CD4-positive, alpha-beta memory T cell (primary cell): ENCODE measurements at regions of chr6 and their contacts with region 1.

Region 1: DNA sequence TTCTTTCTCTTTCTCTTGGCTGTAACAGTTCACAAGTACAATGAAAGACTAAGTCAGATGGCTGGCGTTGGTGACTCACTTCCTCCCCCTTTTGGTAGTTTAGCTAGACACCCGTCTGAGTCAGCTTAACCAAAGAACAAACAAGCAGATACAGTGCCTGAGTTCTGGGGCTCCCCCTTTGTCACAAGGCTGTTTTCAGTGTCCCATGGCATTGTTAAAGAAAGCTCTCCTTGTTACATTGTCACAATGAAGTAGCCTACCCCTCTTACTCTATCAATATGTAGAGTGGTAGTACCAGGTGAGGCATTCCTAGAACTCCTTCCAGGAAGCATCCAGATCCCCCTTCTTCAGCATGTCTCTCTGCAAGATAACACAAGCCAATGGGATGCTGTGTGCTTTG is 38.6 kb downstream of the KIAA0408 start:
- DNase-seq: peak; percentile 45 to 85 (median 58)
- H3K4me3 ChIP-seq: no peak overlapping the region
- H3K4me3 Mint-ChIP-seq: no peak overlapping the region
- H3K27ac ChIP-seq: no peak overlapping the region
- H3K27ac Mint-ChIP-seq: peak overlapping the region in 4 of 7 donors; percentile 1 to 49 (median 38)
- H3K4me1 ChIP-seq: no peaks in the 10 kb centered on the region
- H3K4me1 Mint-ChIP-seq: peaks cover 5 to 7% (median 6%) of the 10 kb centered on the region in 4 donors
- H3K27me3 ChIP-seq: no peaks in the 10 kb centered on the region
- H3K27me3 Mint-ChIP-seq: no peaks in the 10 kb centered on the region

Region 2: GRCh38 chr6:125764121-125764671 is 1656.4 kb before region 1 on chr6:
- CTCF ChIA-PET with region 1: no interaction called
- POLR2A ChIA-PET with region 1: no interaction called
- intact Hi-C with region 1: no loop called
- DNase-seq: no peak
- H3K4me3 ChIP-seq: no peak overlapping the region
- H3K4me3 Mint-ChIP-seq: no peak overlapping the region
- H3K27ac ChIP-seq: no peak overlapping the region
- H3K27ac Mint-ChIP-seq: no peak overlapping the region
- H3K4me1 ChIP-seq: no peaks in the 10 kb centered on the region
- H3K4me1 Mint-ChIP-seq: peaks cover 0 to 5% (median 0%) of the 10 kb centered on the region in 4 donors
- H3K27me3 ChIP-seq: peaks cover 4% of the 10 kb centered on the region
- H3K27me3 Mint-ChIP-seq: peaks cover 36 to 45% of the 10 kb centered on the region in 2 donors

Region 3: DNA sequence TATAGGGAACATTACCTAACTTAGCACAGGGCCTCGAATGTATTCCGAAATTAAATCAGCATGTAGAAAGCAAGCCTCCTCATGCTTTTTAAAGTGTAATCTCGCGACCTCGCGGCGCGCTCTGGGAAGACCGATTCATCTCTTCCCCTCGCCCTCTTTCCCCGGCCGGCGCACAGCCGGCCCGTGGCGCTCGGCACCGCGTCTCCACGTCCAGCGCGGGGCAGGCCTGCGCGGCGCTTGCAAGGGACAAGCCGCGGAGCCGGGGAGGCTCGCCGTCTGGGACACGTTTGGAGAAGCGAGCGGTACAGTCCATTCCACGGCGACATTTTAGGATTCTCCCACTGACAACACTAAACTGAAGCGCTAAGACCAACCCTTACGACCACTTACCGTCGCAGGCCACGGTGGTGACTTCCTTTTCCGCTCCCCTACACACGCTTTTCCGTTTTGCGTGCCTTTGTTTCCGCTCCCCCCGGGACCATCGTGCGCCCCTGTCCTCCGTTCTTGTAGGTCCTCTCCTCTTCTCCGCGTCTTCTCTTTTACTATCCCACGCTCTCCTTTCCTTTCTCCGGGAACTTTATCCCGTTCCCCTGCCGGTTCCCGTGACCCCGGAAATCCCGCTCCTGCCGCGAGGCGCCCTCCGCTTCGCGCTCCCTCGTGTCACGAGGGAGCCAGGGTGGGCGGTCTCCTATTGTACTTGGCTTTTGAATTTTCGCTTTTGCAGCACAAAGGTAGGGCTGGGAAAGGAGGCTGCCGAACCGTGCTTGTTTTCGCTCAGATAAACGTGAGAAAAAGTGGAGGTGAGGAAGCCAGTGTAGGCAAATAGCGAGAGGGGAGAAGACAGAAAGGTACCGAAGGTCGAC is 77.4 kb before region 1 on chr6 and contains the start of gene ECHDC1:
- CTCF ChIA-PET with region 1: interaction called, 3 read pairs
- POLR2A ChIA-PET with region 1: no interaction called
- intact Hi-C with region 1: loop called (anchors 2 kb)
- DNase-seq: peak; percentile 65 to 71 (median 69)
- H3K4me3 ChIP-seq: peak within 1 kb of the TSS; percentile 70 to 97
- H3K4me3 Mint-ChIP-seq: no peak within 1 kb of the TSS
- H3K27ac ChIP-seq: peak within 1 kb of the TSS; percentile 65
- H3K27ac Mint-ChIP-seq: no peak within 1 kb of the TSS
- H3K4me1 ChIP-seq: peaks cover 52% of the 10 kb centered on the region
- H3K4me1 Mint-ChIP-seq: peaks cover 4 to 18% (median 12%) of the 10 kb centered on the region in 4 donors
- H3K27me3 ChIP-seq: no peaks in the 10 kb centered on the region
- H3K27me3 Mint-ChIP-seq: no peaks in the 10 kb centered on the region
- total RNA-seq, gene ECHDC1: 35.5 to 39.3 TPM